ENCODE measurements at regions of chr19 and their contacts with region 1.

Region 1: DNA sequence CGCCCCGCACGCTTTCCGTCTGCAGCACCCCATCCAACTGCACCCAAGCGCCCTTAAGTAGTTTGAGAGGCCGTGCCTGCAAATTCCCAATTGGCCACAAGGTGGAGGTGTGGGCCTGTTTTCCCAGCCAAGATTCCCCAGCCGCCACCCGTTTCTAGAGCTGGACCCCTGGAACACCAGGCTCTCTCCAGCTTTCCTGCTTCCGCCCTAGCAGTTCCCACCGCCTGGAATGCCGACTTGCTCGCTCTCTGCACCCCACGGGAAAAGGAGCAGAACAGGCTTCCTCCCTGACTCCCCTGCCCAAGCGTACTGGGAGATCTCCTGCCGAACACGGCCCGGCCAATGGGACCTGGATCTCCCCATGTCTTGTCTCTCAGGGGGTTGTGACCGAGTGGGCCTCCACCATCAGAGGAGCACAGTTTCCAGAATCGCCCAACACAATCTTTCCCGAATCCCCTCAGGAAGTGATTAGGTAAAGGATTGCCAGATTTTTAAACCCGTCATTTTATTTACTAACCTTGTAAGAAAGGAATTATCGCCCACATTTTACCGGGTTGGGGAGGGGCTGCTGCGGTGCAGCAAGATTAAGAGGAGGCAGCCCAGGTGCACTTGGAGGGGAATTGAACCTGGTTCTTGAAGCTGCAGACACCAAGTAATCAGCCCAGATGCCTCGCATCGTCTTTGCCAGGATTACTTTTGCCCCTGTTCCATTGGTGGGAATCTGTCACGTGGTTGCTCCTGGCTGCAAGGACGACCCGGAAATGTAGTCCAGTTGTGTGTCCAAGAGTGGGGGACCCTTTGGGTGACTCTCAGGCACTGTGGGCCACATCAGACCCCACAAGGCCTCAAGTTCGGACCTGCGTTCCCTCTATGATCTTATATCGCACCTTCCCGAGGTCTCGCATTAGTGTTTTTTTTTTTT is 3.5 kb upstream of the NAPSA start:
- DNase-seq: peak; percentile 90
- H3K4me3 ChIP-seq: peak overlapping the region; percentile 32 to 82 (median 64)
- H3K27ac ChIP-seq: peak overlapping the region; percentile 14 to 87 (median 74)
- H3K4me1 ChIP-seq: peaks cover 5 to 47% (median 25%) of the 10 kb centered on the region in 6 donors
- H3K27me3 ChIP-seq: no peaks in the 10 kb centered on the region
- CTCF ChIP-seq: peak; percentile 80 to 94 (median 92)
- POLR2A ChIP-seq: no peak

Region 2: DNA sequence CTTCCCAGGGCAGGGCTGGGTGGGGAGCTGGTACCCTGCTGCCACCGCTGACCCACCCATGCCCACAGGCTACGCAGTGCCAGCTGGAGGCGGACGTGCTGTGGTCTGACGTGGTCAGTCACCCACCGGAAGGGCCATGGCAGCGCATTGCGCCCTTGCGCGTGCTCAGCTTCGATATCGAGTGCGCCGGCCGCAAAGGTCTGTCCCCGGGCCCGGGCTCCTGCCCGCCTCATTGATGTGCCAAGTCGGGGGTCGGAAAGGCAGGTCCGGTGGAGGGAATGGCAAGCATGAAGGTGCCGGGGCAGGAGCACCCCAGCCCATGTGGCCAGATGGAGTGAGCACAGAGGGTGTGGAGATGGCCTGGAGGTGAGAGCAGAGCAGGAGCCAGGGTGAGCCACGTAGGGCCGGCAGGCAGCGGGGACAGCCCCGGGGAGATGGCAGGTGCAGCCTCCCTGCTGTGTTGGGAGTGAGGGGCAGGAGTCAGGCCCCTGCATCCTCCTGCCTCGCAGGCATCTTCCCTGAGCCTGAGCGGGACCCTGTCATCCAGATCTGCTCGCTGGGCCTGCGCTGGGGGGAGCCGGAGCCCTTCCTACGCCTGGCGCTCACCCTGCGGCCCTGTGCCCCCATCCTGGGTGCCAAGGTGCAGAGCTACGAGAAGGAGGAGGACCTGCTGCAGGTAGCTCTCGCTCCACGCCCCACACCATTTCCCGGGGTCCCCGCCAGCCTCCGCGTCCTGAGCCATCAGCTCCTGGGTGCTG is 33.8 kb after region 1 on chr19:
- intact Hi-C with region 1: no loop called
- DNase-seq: peak; percentile 70
- H3K4me3 ChIP-seq: no peak overlapping the region
- H3K27ac ChIP-seq: no peak overlapping the region
- H3K4me1 ChIP-seq: no peaks in the 10 kb centered on the region
- H3K27me3 ChIP-seq: no peaks in the 10 kb centered on the region
- CTCF ChIP-seq: no peak
- POLR2A ChIP-seq: no peak

Region 3: GRCh38 chr19:50414864-50415660 is 46.2 kb after region 1 on chr19:
- intact Hi-C with region 1: loop called (anchors 10 kb)
- DNase-seq: peak; percentile 96
- H3K4me3 ChIP-seq: peak overlapping the region in 4 of 8 donors; percentile 13 to 62 (median 24)
- H3K27ac ChIP-seq: peak overlapping the region; percentile 36 to 93 (median 80)
- H3K4me1 ChIP-seq: peaks cover 0 to 57% (median 35%) of the 10 kb centered on the region in 6 donors
- H3K27me3 ChIP-seq: peaks cover 0 to 32% (median 6%) of the 10 kb centered on the region in 7 donors
- CTCF ChIP-seq: peak; percentile 77 to 97 (median 92)
- POLR2A ChIP-seq: no peak

Region 4: GRCh38 chr19:50461066-50461875 is 92.4 kb after region 1 on chr19:
- intact Hi-C with region 1: loop called (anchors 5 kb)
- DNase-seq: peak; percentile 82
- H3K4me3 ChIP-seq: no peak overlapping the region
- H3K27ac ChIP-seq: peak overlapping the region in 3 of 8 donors; percentile 20 to 65 (median 53)
- H3K4me1 ChIP-seq: peaks cover 0 to 19% (median 14%) of the 10 kb centered on the region in 6 donors
- H3K27me3 ChIP-seq: peaks cover 0 to 54% (median 15%) of the 10 kb centered on the region in 7 donors
- CTCF ChIP-seq: peak; percentile 38 to 91 (median 80)
- POLR2A ChIP-seq: no peak